Endothelial cell of umbilical vein (primary cell): ENCODE measurements at regions of chr7 and their contacts with region 1.

Region 1: GRCh38 chr7:127629268-127629854 is 11.4 kb upstream of the PAX4 start:
- DNase-seq: no peak
- H3K4me3 ChIP-seq: no peak overlapping the region
- H3K27ac ChIP-seq: no peak overlapping the region
- H3K4me1 ChIP-seq: no peaks in the 10 kb centered on the region
- H3K27me3 ChIP-seq: peaks cover 6 to 19% of the 10 kb centered on the region in 2 experiments
- CTCF ChIP-seq: peak; percentile 26 to 36
- POLR2A ChIP-seq: no peak

Region 2: DNA sequence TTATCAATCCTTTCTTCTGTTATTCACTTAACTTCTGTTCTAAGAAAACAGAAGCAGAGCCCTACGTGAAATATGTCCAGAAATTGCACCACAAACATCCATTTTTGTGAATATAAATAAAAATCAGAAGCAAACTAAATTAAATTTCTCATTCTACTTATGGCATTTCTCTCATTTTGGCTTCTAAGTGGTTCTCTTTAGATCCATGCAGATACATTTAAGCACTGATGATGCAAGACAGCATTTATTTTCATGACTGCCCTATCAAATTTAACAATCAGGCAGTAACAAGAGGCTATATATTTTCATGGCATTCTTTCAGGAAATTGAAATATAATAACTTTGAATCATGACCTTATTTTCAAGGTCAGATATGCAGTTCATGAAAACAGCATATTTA is 1426.2 kb before region 1 on chr7:
- CTCF ChIA-PET with region 1: no interaction called
- POLR2A ChIA-PET with region 1: no interaction called
- dilution Hi-C with region 1: no loop called
- intact Hi-C with region 1: no loop called
- DNase-seq: no peak
- H3K4me3 ChIP-seq: no peak overlapping the region
- H3K27ac ChIP-seq: no peak overlapping the region
- H3K4me1 ChIP-seq: no peaks in the 10 kb centered on the region
- H3K27me3 ChIP-seq: no peaks in the 10 kb centered on the region
- CTCF ChIP-seq: no peak
- POLR2A ChIP-seq: no peak

Region 3: DNA sequence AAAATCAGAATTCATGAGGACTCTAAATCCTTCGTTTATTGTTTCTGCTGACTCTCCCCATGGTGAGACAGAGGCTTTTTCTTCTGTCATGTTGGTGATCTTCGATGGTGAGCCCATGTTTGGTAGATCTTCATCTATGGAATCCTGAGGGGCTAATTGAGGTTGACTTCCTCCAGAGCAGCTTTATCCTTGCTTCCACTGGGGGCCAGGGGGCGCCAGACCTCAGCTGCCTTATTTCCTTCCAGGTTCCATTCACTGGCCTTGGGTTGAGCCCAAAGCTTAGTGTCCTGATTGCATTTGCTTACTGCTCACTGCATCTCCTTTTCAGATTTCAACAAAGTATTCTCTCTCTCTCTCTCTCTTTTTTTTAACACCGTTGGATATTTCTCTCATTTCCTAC is 124.6 kb before region 1 on chr7:
- CTCF ChIA-PET with region 1: interaction called, 5 read pairs
- POLR2A ChIA-PET with region 1: no interaction called
- dilution Hi-C with region 1: no loop called
- intact Hi-C with region 1: loop called (anchors 10 kb)
- DNase-seq: peak; percentile 11
- H3K4me3 ChIP-seq: no peak overlapping the region
- H3K27ac ChIP-seq: no peak overlapping the region
- H3K4me1 ChIP-seq: no peaks in the 10 kb centered on the region
- H3K27me3 ChIP-seq: peaks cover 1 to 4% of the 10 kb centered on the region in 2 experiments
- CTCF ChIP-seq: peak; percentile 49 to 54
- POLR2A ChIP-seq: no peak